Naive thymus-derived CD4-positive, alpha-beta T cell (primary cell): ENCODE measurements at regions of chr7 and their contacts with region 1.

Region 1: DNA sequence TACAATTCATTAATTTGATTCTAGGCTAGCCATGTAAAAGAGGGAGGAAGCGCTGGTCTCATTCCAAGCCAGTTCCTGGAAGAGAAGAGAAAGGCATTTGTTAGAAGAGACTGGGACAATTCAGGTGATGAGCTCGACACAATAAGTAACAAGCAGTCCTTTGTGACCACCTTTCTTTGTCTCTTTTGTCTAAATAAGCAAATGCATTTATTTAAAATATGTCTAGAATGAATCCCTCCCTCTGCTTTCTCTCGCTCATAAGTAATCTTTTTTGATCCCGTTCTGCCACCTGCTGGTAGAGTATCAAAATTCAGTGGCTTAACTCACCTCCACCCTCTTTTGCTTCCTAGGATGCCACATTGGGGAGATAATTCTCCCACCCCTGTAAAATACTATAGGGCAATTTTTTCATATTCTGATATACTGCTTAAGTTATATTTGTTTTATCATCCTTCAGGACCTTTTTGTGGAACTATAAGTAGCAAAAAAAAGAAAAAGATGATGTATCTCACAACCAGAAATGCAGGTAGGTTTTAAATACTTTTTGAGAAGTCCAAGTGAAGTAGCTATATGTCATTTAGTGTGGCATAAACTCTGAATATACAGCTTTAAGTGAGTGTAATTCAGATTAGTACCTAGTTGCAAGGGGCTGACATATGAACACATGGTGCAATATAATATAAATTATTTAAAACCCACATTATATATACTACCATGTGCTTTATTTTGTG is 91.5 kb downstream of the GSDME start:
- DNase-seq: peak in 8 of 9 donors; percentile 14 to 59 (median 37)
- ATAC-seq: peak; percentile 52
- H3K4me3 ChIP-seq: no peak overlapping the region
- H3K4me3 Mint-ChIP-seq: no peak overlapping the region
- H3K27ac ChIP-seq: no peak overlapping the region
- H3K27ac Mint-ChIP-seq: peak overlapping the region in 1 of 9 donors; percentile 21
- H3K4me1 ChIP-seq: no peaks in the 10 kb centered on the region
- H3K4me1 Mint-ChIP-seq: peaks cover 0 to 4% (median 0%) of the 10 kb centered on the region in 7 donors
- H3K27me3 ChIP-seq: no peaks in the 10 kb centered on the region
- H3K27me3 Mint-ChIP-seq: no peaks in the 10 kb centered on the region

Region 2: DNA sequence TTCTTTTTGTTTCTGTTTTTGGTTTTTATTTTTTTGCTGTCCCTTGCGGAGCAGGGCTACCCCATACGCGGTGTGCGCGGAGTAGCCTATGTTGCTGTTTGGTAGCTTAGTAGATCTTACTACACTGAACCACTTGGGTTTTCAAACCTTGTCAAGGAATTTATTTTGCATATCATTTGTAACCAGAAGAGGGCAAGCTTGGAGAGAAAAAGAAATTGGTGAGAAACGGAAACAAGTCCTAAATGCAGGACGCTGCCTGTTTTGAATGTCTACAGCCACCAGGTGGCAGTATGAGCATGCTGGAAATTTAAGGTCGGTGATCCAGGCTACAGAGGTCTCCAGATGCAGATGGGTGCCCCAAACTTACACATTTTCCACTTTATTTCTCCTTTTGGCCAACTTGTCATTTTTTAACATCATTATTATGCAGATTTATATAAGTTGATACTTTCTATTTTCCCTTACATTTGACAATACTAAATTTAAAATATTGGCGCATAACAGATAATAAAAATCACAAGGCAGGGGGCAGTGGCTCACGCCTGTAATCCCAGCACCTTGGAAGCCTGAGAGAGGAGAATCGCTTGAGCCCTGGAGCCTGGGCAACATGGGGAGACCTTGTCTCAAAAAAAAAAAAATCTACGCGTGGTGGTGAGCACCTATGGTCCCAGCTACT is 1118.7 kb before region 1 on chr7:
- CTCF ChIA-PET with region 1: interaction called, 3 read pairs
- POLR2A ChIA-PET with region 1: no interaction called
- intact Hi-C with region 1: loop called (anchors 1 kb)
- DNase-seq: peak; percentile 37 to 89 (median 82)
- ATAC-seq: peak; percentile 98
- H3K4me3 ChIP-seq: no peak overlapping the region
- H3K4me3 Mint-ChIP-seq: no peak overlapping the region
- H3K27ac ChIP-seq: no peak overlapping the region
- H3K27ac Mint-ChIP-seq: peak overlapping the region in 6 of 9 donors; percentile 22 to 90 (median 40)
- H3K4me1 ChIP-seq: no peaks in the 10 kb centered on the region
- H3K4me1 Mint-ChIP-seq: peaks cover 0 to 14% (median 5%) of the 10 kb centered on the region in 7 donors
- H3K27me3 ChIP-seq: no peaks in the 10 kb centered on the region
- H3K27me3 Mint-ChIP-seq: peaks cover 0 to 5% (median 0%) of the 10 kb centered on the region in 5 donors

Region 3: DNA sequence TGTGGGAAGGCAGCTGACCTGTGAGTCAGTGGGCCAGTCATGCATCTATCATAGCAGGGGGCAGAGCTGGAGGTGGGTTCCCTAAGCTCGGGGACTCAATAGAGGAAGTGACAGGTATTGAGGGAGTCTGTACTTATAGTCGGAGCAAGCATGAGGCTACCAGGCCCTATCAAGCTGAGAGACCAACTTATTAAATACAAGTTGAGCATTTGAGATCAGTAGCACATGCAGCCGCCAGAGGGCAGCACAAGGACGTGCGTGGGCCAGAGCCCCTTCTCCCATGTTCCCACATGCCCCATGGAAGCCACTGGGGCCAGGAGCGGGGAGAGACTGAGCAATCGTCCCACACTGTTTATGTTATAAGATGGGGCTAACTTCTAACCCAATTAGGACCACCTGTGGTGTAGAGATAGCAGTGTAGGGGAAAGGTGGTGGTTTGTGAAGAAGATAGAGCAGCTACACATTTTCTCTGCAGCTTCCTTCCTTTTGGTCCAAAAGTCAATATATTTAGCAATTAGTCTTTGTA is 968.8 kb before region 1 on chr7:
- CTCF ChIA-PET with region 1: no interaction called
- POLR2A ChIA-PET with region 1: no interaction called
- intact Hi-C with region 1: loop called (anchors 1 to 10 kb)
- DNase-seq: peak; percentile 4 to 49 (median 37)
- ATAC-seq: peak; percentile 82
- H3K4me3 ChIP-seq: no peak overlapping the region
- H3K4me3 Mint-ChIP-seq: no peak overlapping the region
- H3K27ac ChIP-seq: no peak overlapping the region
- H3K27ac Mint-ChIP-seq: no peak overlapping the region
- H3K4me1 ChIP-seq: no peaks in the 10 kb centered on the region
- H3K4me1 Mint-ChIP-seq: peaks cover 0 to 1% (median 0%) of the 10 kb centered on the region in 7 donors
- H3K27me3 ChIP-seq: no peaks in the 10 kb centered on the region
- H3K27me3 Mint-ChIP-seq: no peaks in the 10 kb centered on the region

Region 4: DNA sequence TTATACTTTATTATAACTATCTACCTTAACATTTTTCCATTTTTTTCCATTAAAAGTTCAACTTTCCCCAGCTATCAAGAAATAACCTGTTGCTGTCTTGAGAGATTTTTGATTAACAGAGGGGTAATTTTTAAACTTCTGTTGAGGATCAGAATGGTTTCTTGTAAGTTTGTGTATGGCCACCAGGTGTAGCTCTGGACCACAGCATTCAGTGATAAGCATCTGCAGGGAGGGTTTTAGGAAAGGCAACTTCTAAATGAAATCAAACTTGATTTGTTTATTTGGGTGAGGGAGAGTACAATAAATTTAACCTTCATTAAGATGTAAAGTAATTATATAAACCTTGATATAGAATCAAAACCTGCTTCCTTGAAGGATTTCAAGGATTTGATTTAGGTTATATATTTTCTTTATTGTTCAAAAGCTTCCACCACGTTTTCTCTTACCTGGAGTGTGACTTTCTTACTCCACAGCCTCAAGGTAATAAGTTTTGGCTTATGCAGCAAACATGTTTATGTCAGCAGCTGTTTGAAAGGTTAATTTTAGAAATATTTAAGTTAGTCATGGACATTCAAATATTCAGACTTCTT is 802.4 kb before region 1 on chr7:
- CTCF ChIA-PET with region 1: interaction called, 5 read pairs
- POLR2A ChIA-PET with region 1: no interaction called
- intact Hi-C with region 1: loop called in 1 of 2 experiments (anchors 5 kb)
- DNase-seq: peak in 3 of 9 donors; percentile 7 to 20 (median 12)
- ATAC-seq: no peak
- H3K4me3 ChIP-seq: no peak overlapping the region
- H3K4me3 Mint-ChIP-seq: no peak overlapping the region
- H3K27ac ChIP-seq: no peak overlapping the region
- H3K27ac Mint-ChIP-seq: no peak overlapping the region
- H3K4me1 ChIP-seq: no peaks in the 10 kb centered on the region
- H3K4me1 Mint-ChIP-seq: no peaks in the 10 kb centered on the region
- H3K27me3 ChIP-seq: no peaks in the 10 kb centered on the region
- H3K27me3 Mint-ChIP-seq: peaks cover 3 to 19% (median 6%) of the 10 kb centered on the region in 5 donors

Region 5: DNA sequence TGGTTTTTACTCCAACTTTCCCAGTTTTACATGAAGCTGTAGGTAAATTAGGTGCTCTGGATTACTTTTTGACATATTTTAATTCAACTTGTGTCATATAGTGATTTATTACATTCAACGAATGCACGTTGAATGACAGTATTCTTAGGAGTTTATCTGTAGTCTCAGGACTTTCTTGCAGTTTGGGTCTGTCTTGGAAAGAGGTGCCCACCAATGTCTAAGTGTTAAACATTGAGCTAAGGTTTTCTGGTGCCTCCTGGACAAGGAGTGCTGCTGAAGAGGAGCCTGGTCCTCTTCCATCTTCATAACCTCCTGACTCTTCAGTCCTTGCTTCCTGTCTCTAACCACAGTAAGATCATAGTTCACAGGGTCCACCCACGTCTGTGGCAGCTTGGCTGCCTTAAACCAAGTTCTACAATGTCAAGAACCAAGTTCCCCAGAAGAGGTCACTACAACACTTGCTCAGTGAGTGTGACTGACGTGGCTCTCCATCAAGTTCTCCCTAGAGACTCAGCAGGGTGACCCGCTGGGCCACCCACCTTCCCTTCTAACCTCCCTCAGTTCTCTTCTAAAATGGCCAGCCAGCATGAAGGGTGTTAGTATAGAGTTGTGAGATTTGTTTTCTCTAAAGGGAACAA is 375.6 kb before region 1 on chr7:
- CTCF ChIA-PET with region 1: interaction called, 6 read pairs
- POLR2A ChIA-PET with region 1: no interaction called
- intact Hi-C with region 1: loop called (anchors 1 kb)
- DNase-seq: peak in 8 of 9 donors; percentile 17 to 51 (median 40)
- ATAC-seq: peak; percentile 83
- H3K4me3 ChIP-seq: no peak overlapping the region
- H3K4me3 Mint-ChIP-seq: no peak overlapping the region
- H3K27ac ChIP-seq: no peak overlapping the region
- H3K27ac Mint-ChIP-seq: no peak overlapping the region
- H3K4me1 ChIP-seq: peaks cover 0 to 5% of the 10 kb centered on the region in 2 donors
- H3K4me1 Mint-ChIP-seq: peaks cover 6 to 19% (median 12%) of the 10 kb centered on the region in 7 donors
- H3K27me3 ChIP-seq: peaks cover 0 to 16% of the 10 kb centered on the region in 2 donors
- H3K27me3 Mint-ChIP-seq: peaks cover 48 to 56% (median 50%) of the 10 kb centered on the region in 5 donors

Region 6: GRCh38 chr7:24401628-24402593 is 263.8 kb before region 1 on chr7:
- CTCF ChIA-PET with region 1: no interaction called
- POLR2A ChIA-PET with region 1: no interaction called
- intact Hi-C with region 1: loop called (anchors 1 kb)
- DNase-seq: peak in 5 of 9 donors; percentile 20 to 35 (median 27)
- ATAC-seq: no peak
- H3K4me3 ChIP-seq: no peak overlapping the region
- H3K4me3 Mint-ChIP-seq: peak overlapping the region in 2 of 10 donors; percentile 25 to 41
- H3K27ac ChIP-seq: no peak overlapping the region
- H3K27ac Mint-ChIP-seq: no peak overlapping the region
- H3K4me1 ChIP-seq: peaks cover 0 to 3% of the 10 kb centered on the region in 2 donors
- H3K4me1 Mint-ChIP-seq: peaks cover 0 to 12% (median 10%) of the 10 kb centered on the region in 7 donors
- H3K27me3 ChIP-seq: no peaks in the 10 kb centered on the region
- H3K27me3 Mint-ChIP-seq: peaks cover 0 to 11% (median 0%) of the 10 kb centered on the region in 5 donors